GM10248 (cell line): ENCODE measurements at regions of chr15 and their contacts with region 1.

Region 1: GRCh38 chr15:75801859-75802593 is 41.2 kb upstream of the UBE2Q2 start:
- DNase-seq: peak; percentile 89
- CTCF ChIP-seq: peak; percentile 63

Region 2: GRCh38 chr15:75684642-75685041 is 117.4 kb before region 1 on chr15:
- CTCF ChIA-PET with region 1: interaction called, 44 read pairs
- POLR2A ChIA-PET with region 1: no interaction called
- DNase-seq: no peak
- CTCF ChIP-seq: no peak

Region 3: DNA sequence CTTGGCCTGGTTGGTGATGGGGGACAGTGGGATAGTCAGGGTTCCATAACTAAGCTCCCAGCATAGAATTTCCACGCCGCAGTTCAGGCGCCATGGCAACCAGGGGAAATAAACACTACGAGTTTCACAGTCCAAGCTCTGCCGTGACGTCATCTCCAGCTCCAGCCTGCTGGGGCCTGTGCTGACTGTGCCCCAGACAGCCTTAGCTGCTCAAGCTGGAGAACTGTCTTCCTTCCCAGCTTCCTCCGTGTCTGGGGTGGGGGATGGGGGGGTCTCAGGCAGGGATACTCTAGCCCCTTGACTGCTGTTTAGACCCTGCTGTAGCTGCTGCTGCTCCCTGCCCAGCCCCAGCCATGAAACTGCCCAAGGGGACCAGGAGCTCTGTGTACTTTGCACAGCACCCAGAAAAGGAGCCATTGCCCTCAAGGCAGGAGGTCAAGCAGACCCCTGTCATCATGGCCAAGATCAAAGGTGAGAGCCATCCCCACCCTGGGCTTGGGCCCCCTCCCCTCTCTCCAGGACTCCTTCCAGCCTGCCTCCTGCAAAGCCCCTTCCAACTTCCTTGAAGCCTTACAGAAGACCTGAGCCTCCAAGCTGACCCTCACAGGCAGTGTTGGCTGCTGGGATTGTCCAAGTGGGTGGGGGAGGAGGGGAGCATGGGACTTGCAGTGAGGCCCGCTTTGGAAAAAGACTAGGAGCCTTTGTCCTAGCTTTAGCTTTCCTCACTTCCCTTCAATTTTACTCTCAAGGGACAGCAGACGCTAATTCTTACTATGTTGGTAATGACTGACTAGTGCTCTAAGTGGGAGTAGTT is 78.0 kb before region 1 on chr15:
- CTCF ChIA-PET with region 1: interaction called, 37 read pairs
- POLR2A ChIA-PET with region 1: no interaction called
- DNase-seq: peak; percentile 89
- CTCF ChIP-seq: no peak

Region 4: GRCh38 chr15:75750261-75751050 is 51.6 kb before region 1 on chr15:
- CTCF ChIA-PET with region 1: interaction called, 13 read pairs
- POLR2A ChIA-PET with region 1: no interaction called
- DNase-seq: no peak
- CTCF ChIP-seq: no peak

Region 5: DNA sequence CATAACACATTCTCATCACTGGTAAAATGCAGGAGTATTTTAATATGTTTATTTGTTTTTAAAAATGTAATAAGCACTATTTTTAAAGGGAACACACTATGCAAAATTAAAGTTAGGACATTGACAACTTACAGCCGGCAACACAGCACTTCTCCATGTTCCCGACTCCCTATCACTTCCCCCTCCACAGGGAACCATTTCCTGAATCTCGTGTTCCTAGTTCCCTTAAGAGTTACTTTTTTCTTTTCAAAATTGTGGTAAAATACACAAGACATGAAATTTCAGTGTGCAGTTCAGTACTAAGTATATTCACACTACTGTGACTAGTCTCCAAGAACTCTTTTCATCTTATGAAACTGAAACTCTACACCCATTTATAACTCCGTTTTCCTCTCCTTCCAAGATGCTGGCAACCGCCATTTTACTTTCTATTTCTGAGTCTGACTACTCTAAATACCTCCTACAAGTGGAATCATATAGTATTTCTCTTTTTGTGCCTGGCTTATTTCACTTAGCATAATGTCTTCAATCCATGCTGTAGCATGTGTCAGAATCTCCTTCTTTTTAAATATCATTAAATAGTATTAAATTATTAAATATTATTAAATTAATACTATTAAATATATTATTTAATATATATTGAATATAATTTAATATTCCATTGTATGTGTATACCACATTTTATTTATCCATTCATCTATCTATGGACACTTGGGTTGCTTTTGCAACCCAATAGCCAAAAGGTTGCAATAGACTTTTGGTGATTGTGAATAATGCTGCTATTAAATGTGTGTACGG is 15.3 kb after region 1 on chr15:
- CTCF ChIA-PET with region 1: interaction called, 26 read pairs
- POLR2A ChIA-PET with region 1: no interaction called
- DNase-seq: no peak
- CTCF ChIP-seq: no peak

Region 6: GRCh38 chr15:75823860-75824613 is 22.0 kb after region 1 on chr15:
- CTCF ChIA-PET with region 1: interaction called, 26 read pairs
- POLR2A ChIA-PET with region 1: no interaction called
- DNase-seq: no peak
- CTCF ChIP-seq: no peak